Activated CD8-positive, alpha-beta T cell treated with anti-CD3 and anti-CD28 coated beads for 36 hours (primary cell): ENCODE measurements at regions of chr3 and their contacts with region 1.

Region 1: DNA sequence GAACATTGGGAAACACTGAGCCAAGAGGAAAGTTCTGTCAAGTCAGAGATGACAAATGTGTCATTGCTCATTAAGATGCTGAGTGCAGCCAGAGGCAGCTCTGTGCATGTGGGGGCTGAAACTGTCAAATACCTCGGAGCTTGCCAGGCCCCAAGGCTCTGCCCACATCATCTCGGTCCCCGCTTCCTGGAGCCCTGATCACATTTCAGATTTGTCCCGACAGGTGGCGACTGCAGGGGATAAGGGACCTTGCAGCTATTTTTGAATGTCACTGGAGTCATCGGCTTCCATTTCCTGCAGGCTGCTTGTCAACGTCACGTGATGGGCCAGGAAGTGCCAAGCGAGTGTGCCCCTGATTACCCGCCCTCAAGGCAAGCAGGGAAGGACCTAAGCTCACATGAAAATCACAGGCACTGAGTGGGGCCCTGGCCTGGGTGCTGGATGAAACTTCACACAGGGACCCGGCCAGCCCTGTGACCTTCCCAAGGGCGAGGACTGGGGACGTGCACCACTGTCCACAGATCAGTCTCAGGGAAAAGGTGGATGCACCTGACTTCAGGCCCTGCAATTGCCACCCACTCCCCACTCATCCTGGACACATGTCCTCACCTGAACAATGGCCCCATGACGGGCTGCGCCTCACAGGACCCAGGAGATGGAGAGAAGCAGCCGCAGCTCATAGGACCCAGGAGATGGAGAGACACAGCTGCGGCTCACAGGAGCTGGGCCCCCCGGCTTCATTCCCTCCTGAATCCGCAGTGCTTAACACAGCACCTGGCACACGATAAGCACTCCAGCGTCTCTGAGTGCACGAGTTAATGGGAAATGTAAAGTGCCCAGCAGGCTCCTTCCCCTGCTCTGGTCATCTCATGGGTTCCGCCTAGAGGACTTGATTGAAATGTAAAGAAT is 73.4 kb downstream of the NUP210 start:
- DNase-seq: peak; percentile 93
- ATAC-seq: peak; percentile 95
- H3K4me3 Mint-ChIP-seq: no peak overlapping the region
- H3K27ac Mint-ChIP-seq: peak overlapping the region; percentile 87
- H3K4me1 Mint-ChIP-seq: peaks cover 58% of the 10 kb centered on the region
- H3K27me3 Mint-ChIP-seq: no peaks in the 10 kb centered on the region
- CTCF ChIP-seq: peak; percentile 50

Region 2: DNA sequence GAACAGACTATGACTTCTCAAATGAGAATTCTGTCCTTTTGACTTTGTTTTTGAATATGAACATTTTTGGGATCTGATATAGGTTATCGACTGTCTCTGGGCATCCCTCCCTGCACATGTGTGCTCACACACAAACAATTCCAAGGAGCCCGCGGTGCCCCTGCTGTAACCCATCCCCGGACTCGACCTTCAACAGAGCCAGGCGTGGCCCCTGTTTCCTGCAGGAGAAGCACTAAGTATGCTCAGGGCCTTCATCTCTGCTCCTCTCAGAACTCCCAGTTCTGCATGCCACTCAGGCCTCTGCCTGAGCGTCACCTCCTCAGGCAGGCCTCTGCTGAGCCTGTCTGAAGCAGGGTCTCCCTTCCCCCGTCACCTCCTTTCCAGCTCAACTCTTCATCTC is 15.8 kb after region 1 on chr3:
- CTCF ChIA-PET with region 1: interaction called, 10 read pairs
- POLR2A ChIA-PET with region 1: interaction called, 5 read pairs
- intact Hi-C with region 1: no loop called
- DNase-seq: no peak
- ATAC-seq: no peak
- H3K4me3 Mint-ChIP-seq: no peak overlapping the region
- H3K27ac Mint-ChIP-seq: peak overlapping the region; percentile 26
- H3K4me1 Mint-ChIP-seq: no peaks in the 10 kb centered on the region
- H3K27me3 Mint-ChIP-seq: no peaks in the 10 kb centered on the region
- CTCF ChIP-seq: no peak

Region 3: GRCh38 chr3:13372656-13373055 is 25.9 kb after region 1 on chr3:
- CTCF ChIA-PET with region 1: no interaction called
- POLR2A ChIA-PET with region 1: no interaction called
- intact Hi-C with region 1: no loop called
- DNase-seq: no peak
- ATAC-seq: no peak
- H3K4me3 Mint-ChIP-seq: no peak overlapping the region
- H3K27ac Mint-ChIP-seq: no peak overlapping the region
- H3K4me1 Mint-ChIP-seq: no peaks in the 10 kb centered on the region
- H3K27me3 Mint-ChIP-seq: no peaks in the 10 kb centered on the region
- CTCF ChIP-seq: no peak

Region 4: DNA sequence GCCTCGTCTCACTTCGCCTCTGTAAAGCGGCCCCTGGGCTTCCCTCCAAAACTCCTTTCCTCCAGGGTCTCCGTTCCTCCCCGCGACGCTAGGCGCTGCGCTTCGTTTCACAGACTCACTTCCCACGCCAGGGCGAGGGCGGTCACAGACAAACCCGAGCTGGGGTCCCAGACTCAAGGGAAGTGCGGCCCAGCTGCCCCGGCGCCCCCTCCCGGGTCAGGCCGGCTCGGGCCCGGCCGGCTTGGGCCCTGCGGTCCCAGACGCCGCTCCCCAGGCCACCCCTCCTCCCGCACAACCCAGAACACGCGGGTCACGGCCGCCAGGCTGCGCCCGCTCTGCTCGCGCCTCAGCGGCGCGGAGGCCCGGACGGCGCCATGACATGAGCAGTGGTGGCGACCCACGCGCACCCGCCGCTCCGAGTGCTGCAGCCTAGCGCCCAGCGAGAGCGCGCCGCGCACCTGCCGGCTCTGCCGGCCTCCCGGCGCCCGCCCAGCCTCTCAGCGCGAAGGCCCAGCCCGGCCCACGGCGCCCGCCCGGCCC is 72.8 kb after region 1 on chr3:
- CTCF ChIA-PET with region 1: interaction called, 4 read pairs
- POLR2A ChIA-PET with region 1: interaction called, 20 read pairs
- intact Hi-C with region 1: no loop called
- DNase-seq: peak; percentile 63
- ATAC-seq: peak; percentile 27
- H3K4me3 Mint-ChIP-seq: peak overlapping the region; percentile 90
- H3K27ac Mint-ChIP-seq: peak overlapping the region; percentile 96
- H3K4me1 Mint-ChIP-seq: peaks cover 51% of the 10 kb centered on the region
- H3K27me3 Mint-ChIP-seq: no peaks in the 10 kb centered on the region
- CTCF ChIP-seq: peak; percentile 32